ENCODE measurements at regions of chr11 and their contacts with region 1.

Region 1: DNA sequence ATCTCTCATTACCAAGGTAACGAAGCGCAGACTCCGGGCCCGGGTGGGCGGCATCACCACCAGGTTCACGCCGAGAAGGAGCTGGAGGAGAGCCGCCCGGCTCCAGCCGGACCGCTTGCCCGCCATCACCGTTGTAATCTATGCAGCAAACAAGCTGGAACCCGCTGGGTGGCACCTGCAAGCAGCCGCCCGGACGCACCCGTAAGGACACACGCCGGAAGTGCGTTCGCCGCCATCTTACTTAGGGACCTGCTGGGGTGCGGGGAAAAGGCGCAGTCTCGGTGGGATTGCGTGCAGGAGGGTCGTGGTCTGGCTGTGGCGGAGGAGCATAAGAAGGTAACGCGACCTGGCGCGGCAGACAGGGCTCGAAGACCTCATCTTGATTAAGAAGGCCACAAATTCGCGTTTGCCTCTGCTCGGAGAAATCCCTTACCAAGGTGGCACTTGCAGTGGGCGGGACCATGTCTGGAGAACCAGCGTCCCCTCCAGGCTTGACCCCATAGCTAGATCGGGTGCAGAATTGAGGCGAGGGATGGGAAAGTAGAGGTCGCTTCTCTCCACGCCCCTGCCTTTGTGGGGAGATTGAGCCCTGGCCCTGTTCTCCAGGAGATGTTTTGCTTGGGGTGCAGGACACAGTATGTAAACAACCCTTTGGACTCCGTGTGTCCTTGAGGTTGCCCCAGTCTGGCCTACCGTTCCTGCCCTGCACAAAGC is at the start of gene ACP2:
- DNase-seq: peak; percentile 91
- H3K4me3 ChIP-seq: peak within 1 kb of the TSS; percentile 64
- H3K4me3 Mint-ChIP-seq: peak within 1 kb of the TSS; percentile 97
- H3K27ac Mint-ChIP-seq: peak within 1 kb of the TSS; percentile 99
- H3K4me1 ChIP-seq: peaks cover 11% of the 10 kb centered on the region
- H3K4me1 Mint-ChIP-seq: peaks cover 8% of the 10 kb centered on the region
- H3K27me3 ChIP-seq: no peaks in the 10 kb centered on the region
- H3K27me3 Mint-ChIP-seq: no peaks in the 10 kb centered on the region
- CTCF ChIP-seq: peak; percentile 14 to 40
- total RNA-seq, gene ACP2: 44.7 and 48.2 TPM in 2 replicates

Region 2: DNA sequence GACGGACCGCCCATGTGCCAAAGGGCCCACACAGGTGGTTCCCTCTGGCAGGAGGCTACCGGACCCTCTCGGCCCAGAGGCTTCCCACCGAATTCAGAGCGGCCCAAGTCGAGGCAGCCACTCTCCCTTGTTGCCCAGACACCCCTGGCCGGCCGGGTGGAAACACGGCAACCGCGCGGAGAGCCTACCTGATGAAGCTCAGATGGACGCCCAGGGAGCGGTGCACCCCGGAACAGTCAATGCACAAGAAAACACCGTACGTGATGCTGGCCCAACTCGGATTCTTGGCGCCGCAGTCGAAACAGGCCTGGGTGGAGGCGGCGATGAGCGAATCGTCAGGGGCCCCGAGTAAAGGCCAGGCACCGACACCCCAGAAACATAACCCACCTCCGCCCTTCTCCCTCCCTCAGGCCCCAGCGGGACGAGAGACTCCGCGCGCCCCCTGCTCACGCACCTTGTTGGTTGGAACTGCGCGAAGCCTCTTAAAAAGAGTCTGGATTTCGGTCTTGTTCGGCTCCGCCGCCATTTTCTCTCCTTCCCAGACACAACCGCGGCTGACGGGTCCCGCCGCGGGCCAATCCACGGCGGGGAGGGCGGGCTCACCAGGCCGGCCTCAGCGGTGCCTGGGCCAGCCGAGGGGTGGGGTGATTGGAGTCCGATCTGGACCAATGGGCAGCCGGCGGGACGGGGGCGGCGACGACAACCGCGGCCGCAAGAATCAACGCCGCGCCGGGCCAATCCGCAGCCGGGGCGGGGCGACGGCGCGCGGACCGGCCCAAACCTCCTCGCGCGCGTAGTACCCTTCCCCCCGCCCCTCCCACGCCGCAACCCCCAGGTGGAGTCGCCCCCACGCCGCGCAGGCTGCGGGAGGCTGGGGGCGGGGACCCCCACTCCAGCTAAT is 72.2 kb before region 1 on chr11 and contains the start of gene ARFGAP2:
- CTCF ChIA-PET with region 1: interaction called, 7 read pairs
- POLR2A ChIA-PET with region 1: interaction called, 3 read pairs
- intact Hi-C with region 1: loop called (anchors 1 kb)
- DNase-seq: peak; percentile 96 to 98
- H3K4me3 ChIP-seq: peak within 1 kb of the TSS; percentile 99
- H3K4me3 Mint-ChIP-seq: peak within 1 kb of the TSS; percentile 87
- H3K27ac Mint-ChIP-seq: peak within 1 kb of the TSS; percentile 99
- H3K4me1 ChIP-seq: peaks cover 8% of the 10 kb centered on the region; the same call in 1 of the 2 replicates
- H3K4me1 Mint-ChIP-seq: peaks cover 20% of the 10 kb centered on the region
- H3K27me3 ChIP-seq: no peaks in the 10 kb centered on the region
- H3K27me3 Mint-ChIP-seq: no peaks in the 10 kb centered on the region
- CTCF ChIP-seq: no peak
- total RNA-seq, gene ARFGAP2: 99.9 and 100.0 TPM in 2 replicates

Region 3: DNA sequence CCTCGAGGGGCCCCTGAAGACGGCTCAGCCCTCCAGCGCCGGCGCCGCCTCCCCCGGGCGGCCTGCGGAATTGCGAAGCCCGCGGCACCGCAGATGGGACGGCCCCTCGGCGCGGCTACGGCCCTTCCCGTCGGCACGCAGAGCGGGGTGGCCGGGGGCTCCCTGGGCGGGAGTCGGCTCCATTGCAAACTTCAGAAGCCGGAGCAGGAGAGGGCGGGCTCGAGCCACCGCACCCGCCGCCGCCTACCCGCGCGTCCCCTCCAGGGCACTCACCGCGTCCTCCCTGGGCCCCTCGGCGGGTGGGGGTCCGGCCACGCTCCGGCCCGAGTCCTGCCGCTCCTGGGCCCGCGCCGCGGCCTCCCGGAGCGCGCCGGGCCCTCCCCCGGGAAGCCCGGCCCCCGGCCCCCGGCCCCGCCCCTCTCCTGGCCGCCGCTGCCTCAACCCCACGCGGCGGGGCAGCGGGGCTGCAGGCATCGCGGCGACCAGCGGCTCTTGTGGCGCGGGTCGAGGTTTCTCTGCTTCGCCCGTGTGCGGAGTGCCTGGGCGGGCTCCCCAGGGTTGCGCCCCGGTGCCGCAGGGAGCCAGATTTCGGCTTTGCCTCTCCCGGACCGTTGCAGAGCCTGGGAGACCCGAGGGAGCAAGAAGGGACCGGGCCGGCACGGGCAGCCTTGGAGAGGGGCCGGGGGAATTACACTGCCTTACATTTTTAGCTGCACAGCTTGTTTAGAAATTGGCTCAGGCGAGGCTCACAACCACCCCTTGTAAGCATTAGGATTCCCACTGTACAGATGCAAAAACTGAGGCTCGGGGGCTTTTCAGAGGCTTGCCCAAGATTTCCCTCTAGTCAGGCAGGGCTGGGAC is 62.5 kb before region 1 on chr11 and contains the start of gene PACSIN3:
- CTCF ChIA-PET with region 1: interaction called, 5 read pairs
- POLR2A ChIA-PET with region 1: interaction called, 13 read pairs
- intact Hi-C with region 1: no loop called
- DNase-seq: peak; percentile 71 to 79
- H3K4me3 ChIP-seq: peak within 1 kb of the TSS; percentile 74
- H3K4me3 Mint-ChIP-seq: peak within 1 kb of the TSS; percentile 92
- H3K27ac Mint-ChIP-seq: peak within 1 kb of the TSS; percentile 91
- H3K4me1 ChIP-seq: peaks cover 36% of the 10 kb centered on the region
- H3K4me1 Mint-ChIP-seq: peaks cover 11% of the 10 kb centered on the region
- H3K27me3 ChIP-seq: no peaks in the 10 kb centered on the region
- H3K27me3 Mint-ChIP-seq: no peaks in the 10 kb centered on the region
- CTCF ChIP-seq: no peak
- total RNA-seq, gene PACSIN3: 72.8 and 76.7 TPM in 2 replicates

Region 4: GRCh38 chr11:47213985-47214564 is 34.7 kb before region 1 on chr11:
- CTCF ChIA-PET with region 1: interaction called, 3 read pairs
- POLR2A ChIA-PET with region 1: interaction called, 22 read pairs
- intact Hi-C with region 1: no loop called
- DNase-seq: peak; percentile 89
- H3K4me3 ChIP-seq: peak overlapping the region; percentile 73
- H3K4me3 Mint-ChIP-seq: peak overlapping the region; percentile 79
- H3K27ac Mint-ChIP-seq: peak overlapping the region; percentile 88
- H3K4me1 ChIP-seq: peaks cover 17% of the 10 kb centered on the region
- H3K4me1 Mint-ChIP-seq: peaks cover 22% of the 10 kb centered on the region
- H3K27me3 ChIP-seq: no peaks in the 10 kb centered on the region
- H3K27me3 Mint-ChIP-seq: no peaks in the 10 kb centered on the region
- CTCF ChIP-seq: no peak

Region 5: DNA sequence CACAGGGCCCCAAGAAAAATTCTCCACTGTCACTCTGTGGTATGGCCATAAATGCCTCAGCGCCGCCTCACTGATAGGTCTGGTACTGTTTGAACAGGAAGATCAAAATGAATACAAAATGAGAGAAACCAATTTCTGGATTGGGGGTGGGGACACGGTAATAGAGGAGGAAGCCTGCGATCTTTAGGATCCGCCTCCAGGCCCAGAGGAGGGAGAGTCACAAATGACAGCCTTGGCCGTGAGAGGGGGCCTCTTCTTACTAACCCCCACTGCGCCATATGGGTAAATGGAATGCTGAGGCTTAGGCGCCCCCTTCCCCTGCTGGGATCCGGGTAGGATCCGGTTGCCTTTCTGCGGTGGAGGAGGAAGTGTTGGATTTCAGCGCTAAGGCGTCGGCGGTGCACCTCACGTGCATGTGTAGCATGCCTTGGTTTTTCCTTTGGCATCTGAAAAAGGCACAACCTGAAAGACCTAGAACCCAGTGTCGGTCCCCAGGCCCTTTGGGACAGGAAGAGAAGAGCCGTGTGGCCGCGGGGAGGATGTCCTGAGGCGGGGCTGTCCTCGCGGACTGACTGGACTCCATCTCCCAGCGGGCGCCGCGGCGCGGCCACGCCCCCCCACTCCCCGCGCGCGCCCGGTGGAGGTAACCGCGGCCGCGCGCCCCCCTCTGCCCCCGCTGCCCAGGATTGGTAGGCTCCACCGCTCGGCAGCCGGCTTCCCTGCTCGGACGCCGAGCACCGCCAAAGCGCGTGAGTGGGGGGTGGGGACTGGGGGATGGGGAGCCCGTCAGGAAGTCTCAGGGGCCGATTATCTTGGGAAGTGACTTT is 20.4 kb after region 1 on chr11:
- CTCF ChIA-PET with region 1: interaction called, 3 read pairs
- POLR2A ChIA-PET with region 1: no interaction called
- intact Hi-C with region 1: loop called (anchors 2 kb)
- DNase-seq: peak; percentile 93 to 94
- H3K4me3 ChIP-seq: peak overlapping the region; percentile 92
- H3K4me3 Mint-ChIP-seq: peak overlapping the region; percentile 66
- H3K27ac Mint-ChIP-seq: peak overlapping the region; percentile 93
- H3K4me1 ChIP-seq: peaks cover 28% of the 10 kb centered on the region
- H3K4me1 Mint-ChIP-seq: peaks cover 28% of the 10 kb centered on the region
- H3K27me3 ChIP-seq: no peaks in the 10 kb centered on the region
- H3K27me3 Mint-ChIP-seq: no peaks in the 10 kb centered on the region
- CTCF ChIP-seq: peak in 1 of 2 experiments; percentile 16

Region 6: DNA sequence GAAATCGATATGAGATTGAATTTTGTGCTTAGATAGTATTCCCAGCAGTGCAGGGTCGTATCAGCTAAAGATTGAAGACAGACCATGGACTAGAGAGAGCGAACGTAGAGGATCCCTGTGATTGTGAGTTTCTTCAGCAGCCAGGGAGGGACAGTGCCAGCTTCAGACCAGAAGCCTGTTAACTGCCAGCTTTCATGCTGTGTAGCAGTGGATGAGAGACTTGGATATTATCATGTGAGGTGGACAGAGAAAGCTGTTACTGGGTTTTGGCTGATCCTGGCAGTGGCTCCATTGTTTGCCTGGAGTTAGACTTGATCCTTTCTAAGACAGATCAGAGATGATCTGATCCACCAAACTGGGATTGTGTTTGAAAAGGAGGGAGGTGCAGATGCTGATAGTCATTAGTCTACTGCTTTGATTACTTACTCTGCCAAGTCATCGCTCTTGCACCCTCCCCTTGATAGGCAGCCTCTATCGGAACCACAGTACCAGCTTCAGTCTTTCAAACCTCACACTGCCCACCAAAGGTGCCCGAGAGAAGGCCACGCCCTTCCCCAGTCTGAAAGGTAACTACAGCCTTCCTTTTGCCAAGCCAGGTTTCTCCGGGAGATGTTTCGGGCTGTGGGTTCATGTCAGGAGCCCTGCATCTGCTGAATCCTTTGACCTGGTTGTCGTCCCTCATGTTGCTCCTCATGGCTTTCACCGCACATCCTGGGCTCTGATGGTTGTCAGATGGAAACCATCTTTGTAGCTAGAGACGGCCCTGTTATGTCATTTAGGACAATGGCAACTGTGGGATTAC is 37.3 kb after region 1 on chr11:
- CTCF ChIA-PET with region 1: no interaction called
- POLR2A ChIA-PET with region 1: no interaction called
- intact Hi-C with region 1: no loop called
- DNase-seq: no peak
- H3K4me3 ChIP-seq: no peak overlapping the region
- H3K4me3 Mint-ChIP-seq: no peak overlapping the region
- H3K27ac Mint-ChIP-seq: no peak overlapping the region
- H3K4me1 ChIP-seq: no peaks in the 10 kb centered on the region
- H3K4me1 Mint-ChIP-seq: peaks cover 5% of the 10 kb centered on the region
- H3K27me3 ChIP-seq: no peaks in the 10 kb centered on the region
- H3K27me3 Mint-ChIP-seq: no peaks in the 10 kb centered on the region
- CTCF ChIP-seq: no peak

Region 7: DNA sequence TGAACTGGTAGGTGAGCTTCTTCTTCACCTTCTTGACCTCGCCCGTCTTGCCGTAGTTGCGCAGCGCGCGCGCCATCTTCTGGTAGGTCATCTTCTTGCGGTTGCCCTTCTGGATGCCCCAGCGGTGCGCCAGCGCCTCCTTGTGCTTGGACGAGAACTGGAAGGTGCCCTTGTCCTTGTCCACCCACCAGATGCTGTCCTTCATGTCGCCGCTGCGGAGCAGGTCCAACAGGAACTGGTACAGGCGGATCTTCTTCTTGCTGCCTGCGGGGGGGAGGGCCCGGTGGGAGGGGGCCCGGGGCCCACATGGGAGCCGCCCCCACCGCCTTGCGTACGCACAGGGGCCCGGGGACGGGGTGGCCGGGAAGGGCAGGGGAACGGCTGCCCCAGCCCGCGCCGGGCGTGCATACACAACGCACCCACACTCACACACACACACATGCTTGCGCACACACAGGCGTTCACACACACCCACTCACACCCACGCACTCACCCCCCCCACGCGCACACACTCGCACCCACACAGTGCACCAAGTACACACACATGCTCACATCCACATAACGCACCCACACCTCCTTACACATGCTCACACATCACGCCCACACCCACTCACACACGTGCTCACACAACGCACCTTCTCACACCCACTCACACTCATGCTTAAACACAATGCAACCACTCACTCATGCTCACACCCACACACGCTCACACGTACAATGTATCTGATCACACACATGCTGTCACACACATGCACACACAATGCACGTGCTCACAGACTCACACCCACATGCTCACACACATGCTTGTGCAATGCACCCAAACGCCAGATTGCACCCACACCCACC is 106.7 kb after region 1 on chr11:
- CTCF ChIA-PET with region 1: interaction called, 15 read pairs
- POLR2A ChIA-PET with region 1: no interaction called
- intact Hi-C with region 1: no loop called
- DNase-seq: peak; percentile 96 to 97
- H3K4me3 ChIP-seq: peak overlapping the region; percentile 23
- H3K4me3 Mint-ChIP-seq: no peak overlapping the region
- H3K27ac Mint-ChIP-seq: no peak overlapping the region
- H3K4me1 ChIP-seq: peaks cover 4% of the 10 kb centered on the region; the same call in 1 of the 2 replicates
- H3K4me1 Mint-ChIP-seq: no peaks in the 10 kb centered on the region
- H3K27me3 ChIP-seq: no peaks in the 10 kb centered on the region
- H3K27me3 Mint-ChIP-seq: no peaks in the 10 kb centered on the region
- CTCF ChIP-seq: peak; percentile 97 to 100